Mammary epithelial cell (primary cell): ENCODE measurements at regions of chr7 and their contacts with region 1.

Region 1: GRCh38 chr7:23938937-23939552 is 229.0 kb downstream of the STK31 start:
- DNase-seq: peak; percentile 50
- H3K4me3 ChIP-seq: no peak overlapping the region
- H3K27ac ChIP-seq: no peak overlapping the region
- H3K4me1 ChIP-seq: no peaks in the 10 kb centered on the region
- H3K27me3 ChIP-seq: no peaks in the 10 kb centered on the region
- CTCF ChIP-seq: peak; percentile 66 to 85

Region 2: DNA sequence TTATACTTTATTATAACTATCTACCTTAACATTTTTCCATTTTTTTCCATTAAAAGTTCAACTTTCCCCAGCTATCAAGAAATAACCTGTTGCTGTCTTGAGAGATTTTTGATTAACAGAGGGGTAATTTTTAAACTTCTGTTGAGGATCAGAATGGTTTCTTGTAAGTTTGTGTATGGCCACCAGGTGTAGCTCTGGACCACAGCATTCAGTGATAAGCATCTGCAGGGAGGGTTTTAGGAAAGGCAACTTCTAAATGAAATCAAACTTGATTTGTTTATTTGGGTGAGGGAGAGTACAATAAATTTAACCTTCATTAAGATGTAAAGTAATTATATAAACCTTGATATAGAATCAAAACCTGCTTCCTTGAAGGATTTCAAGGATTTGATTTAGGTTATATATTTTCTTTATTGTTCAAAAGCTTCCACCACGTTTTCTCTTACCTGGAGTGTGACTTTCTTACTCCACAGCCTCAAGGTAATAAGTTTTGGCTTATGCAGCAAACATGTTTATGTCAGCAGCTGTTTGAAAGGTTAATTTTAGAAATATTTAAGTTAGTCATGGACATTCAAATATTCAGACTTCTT is 75.7 kb before region 1 on chr7:
- CTCF ChIA-PET with region 1: interaction called, 3 read pairs
- dilution Hi-C with region 1: no loop called
- in situ Hi-C with region 1: no loop called
- intact Hi-C with region 1: loop called (anchors 1 kb)
- DNase-seq: peak; percentile 20
- H3K4me3 ChIP-seq: no peak overlapping the region
- H3K27ac ChIP-seq: no peak overlapping the region
- H3K4me1 ChIP-seq: no peaks in the 10 kb centered on the region
- H3K27me3 ChIP-seq: no peaks in the 10 kb centered on the region
- CTCF ChIP-seq: peak; percentile 73 to 94

Region 3: GRCh38 chr7:24082826-24083225 is 143.8 kb after region 1 on chr7:
- CTCF ChIA-PET with region 1: interaction called, 7 read pairs
- dilution Hi-C with region 1: no loop called
- in situ Hi-C with region 1: no loop called
- intact Hi-C with region 1: loop called (anchors 5 kb)
- DNase-seq: no peak
- H3K4me3 ChIP-seq: no peak overlapping the region
- H3K27ac ChIP-seq: no peak overlapping the region
- H3K4me1 ChIP-seq: no peaks in the 10 kb centered on the region
- H3K27me3 ChIP-seq: no peaks in the 10 kb centered on the region
- CTCF ChIP-seq: no peak

Region 4: DNA sequence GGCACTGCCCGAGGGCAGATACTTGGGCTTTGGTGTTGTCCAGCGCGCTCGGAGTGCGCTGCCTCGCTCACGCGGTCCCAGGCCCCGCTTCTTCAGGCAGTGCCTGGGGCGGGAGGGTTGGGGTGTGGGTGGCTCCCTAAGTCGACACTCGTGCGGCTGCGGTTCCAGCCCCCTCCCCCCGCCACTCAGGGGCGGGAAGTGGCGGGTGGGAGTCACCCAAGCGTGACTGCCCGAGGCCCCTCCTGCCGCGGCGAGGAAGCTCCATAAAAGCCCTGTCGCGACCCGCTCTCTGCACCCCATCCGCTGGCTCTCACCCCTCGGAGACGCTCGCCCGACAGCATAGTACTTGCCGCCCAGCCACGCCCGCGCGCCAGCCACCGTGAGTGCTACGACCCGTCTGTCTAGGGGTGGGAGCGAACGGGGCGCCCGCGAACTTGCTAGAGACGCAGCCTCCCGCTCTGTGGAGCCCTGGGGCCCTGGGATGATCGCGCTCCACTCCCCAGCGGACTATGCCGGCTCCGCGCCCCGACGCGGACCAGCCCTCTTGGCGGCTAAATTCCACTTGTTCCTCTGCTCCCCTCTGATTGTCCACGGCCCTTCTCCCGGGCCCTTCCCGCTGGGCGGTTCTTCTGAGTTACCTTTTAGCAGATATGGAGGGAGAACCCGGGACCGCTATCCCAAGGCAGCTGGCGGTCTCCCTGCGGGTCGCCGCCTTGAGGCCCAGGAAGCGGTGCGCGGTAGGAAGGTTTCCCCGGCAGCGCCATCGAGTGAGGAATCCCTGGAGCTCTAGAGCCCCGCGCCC is 345.1 kb after region 1 on chr7 and contains the start of gene NPY:
- CTCF ChIA-PET with region 1: no interaction called
- dilution Hi-C with region 1: no loop called
- in situ Hi-C with region 1: no loop called
- intact Hi-C with region 1: loop called (anchors 5 kb)
- DNase-seq: no peak
- H3K4me3 ChIP-seq: no peak within 1 kb of the TSS
- H3K27ac ChIP-seq: no peak within 1 kb of the TSS
- H3K4me1 ChIP-seq: peaks cover 3% of the 10 kb centered on the region
- H3K27me3 ChIP-seq: peaks cover 33% of the 10 kb centered on the region
- CTCF ChIP-seq: no peak
- total RNA-seq, gene NPY: not detected